Activated CD4-positive, alpha-beta T cell treated with anti-CD3 and anti-CD28 coated beads, Interleukin-2, amount 10 ng/mL, durations not matched to agents 24 days and 14 days (primary cell): ENCODE measurements at regions of chr7 and their contacts with region 1.

Region 1: DNA sequence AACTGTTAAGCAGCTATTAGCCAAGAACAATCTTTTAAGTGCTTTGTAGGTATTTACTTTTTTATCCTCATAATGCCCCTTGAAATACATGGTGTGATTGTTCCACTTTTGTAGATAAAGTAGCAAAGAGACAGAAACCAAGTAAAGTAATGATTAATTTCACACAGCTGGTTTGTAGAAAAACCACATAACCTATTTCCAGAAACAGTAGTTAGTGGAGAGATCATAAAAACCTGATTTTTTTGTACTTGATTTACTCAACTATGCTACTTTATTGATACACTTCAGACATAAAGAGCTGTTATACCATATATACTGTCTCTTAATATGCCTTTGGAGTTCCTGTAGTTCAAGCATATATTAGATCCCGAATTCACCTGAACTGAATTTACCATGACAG is 118.4 kb downstream of the SEMA3A start:
- DNase-seq: no peak
- H3K4me3 Mint-ChIP-seq: no peak overlapping the region
- H3K27ac Mint-ChIP-seq: no peak overlapping the region
- H3K4me1 Mint-ChIP-seq: peaks cover 7% of the 10 kb centered on the region
- H3K27me3 Mint-ChIP-seq: no peaks in the 10 kb centered on the region

Region 2: GRCh38 chr7:84188786-84189405 is 112.7 kb after region 1 on chr7:
- intact Hi-C with region 1: loop called (anchors 5 kb)
- DNase-seq: no peak
- H3K4me3 Mint-ChIP-seq: no peak overlapping the region
- H3K27ac Mint-ChIP-seq: no peak overlapping the region
- H3K4me1 Mint-ChIP-seq: peaks cover 10% of the 10 kb centered on the region
- H3K27me3 Mint-ChIP-seq: peaks cover 5% of the 10 kb centered on the region

Region 3: DNA sequence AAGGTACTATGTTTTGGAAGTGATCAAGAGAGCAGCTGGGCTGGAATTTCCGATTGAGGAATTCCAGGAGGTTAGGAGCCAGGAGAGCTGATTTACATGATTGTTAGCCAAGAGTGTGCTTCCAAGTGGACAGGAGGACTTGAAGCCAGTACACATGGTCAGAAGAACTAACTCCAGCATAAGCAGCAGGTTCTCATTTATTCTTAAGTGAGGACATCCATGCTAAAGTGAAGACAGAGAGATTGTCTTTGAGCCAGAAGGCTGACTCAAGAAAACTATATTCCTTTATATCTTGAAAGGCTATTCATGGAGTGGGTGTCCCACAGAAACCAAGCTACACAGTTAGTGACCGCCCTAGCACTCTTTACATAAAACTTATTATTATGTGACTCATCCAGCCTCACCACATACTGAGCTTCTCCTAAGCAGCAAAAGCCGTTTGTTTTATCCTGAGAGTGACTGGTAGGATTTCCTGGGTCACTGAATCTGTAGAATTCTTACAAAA is 175.1 kb after region 1 on chr7:
- intact Hi-C with region 1: no loop called
- DNase-seq: no peak
- H3K4me3 Mint-ChIP-seq: no peak overlapping the region
- H3K27ac Mint-ChIP-seq: no peak overlapping the region
- H3K4me1 Mint-ChIP-seq: no peaks in the 10 kb centered on the region
- H3K27me3 Mint-ChIP-seq: no peaks in the 10 kb centered on the region